ENCODE measurements at regions of chrX and their contacts with region 1.

Region 1: GRCh38 chrX:105314466-105314865 is 94.0 kb upstream of the TEX13A start:
- DNase-seq: peak; percentile 14 to 91
- H3K4me3 ChIP-seq: peak overlapping the region; percentile 57
- H3K27ac ChIP-seq: peak overlapping the region; percentile 98
- H3K4me1 ChIP-seq: peaks cover 39% of the 10 kb centered on the region
- H3K27me3 ChIP-seq: no peaks in the 10 kb centered on the region
- CTCF ChIP-seq: no peak

Region 2: DNA sequence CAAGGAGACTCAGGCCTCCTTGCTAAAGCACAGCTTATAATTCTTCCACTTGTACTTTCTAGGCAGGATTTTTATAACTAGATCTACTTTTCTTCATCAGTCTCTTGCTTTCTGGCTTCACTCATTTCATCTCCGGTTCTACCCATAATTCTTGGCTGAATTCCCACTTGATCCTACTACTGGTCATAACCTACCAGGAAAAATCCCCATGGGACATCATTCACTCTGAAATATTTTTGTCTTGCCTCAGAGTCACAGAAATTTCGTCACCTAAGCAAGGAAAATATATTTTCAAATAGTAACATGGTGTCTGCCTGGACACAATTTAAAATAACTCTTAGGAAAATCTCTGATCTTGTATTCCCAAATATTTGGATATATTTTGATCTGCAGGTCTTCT is 216.3 kb before region 1 on chrX:
- CTCF ChIA-PET with region 1: no interaction called
- POLR2A ChIA-PET with region 1: no interaction called
- intact Hi-C with region 1: no loop called
- DNase-seq: no peak
- H3K4me3 ChIP-seq: no peak overlapping the region
- H3K27ac ChIP-seq: no peak overlapping the region
- H3K4me1 ChIP-seq: no peaks in the 10 kb centered on the region
- H3K27me3 ChIP-seq: no peaks in the 10 kb centered on the region
- CTCF ChIP-seq: no peak

Region 3: DNA sequence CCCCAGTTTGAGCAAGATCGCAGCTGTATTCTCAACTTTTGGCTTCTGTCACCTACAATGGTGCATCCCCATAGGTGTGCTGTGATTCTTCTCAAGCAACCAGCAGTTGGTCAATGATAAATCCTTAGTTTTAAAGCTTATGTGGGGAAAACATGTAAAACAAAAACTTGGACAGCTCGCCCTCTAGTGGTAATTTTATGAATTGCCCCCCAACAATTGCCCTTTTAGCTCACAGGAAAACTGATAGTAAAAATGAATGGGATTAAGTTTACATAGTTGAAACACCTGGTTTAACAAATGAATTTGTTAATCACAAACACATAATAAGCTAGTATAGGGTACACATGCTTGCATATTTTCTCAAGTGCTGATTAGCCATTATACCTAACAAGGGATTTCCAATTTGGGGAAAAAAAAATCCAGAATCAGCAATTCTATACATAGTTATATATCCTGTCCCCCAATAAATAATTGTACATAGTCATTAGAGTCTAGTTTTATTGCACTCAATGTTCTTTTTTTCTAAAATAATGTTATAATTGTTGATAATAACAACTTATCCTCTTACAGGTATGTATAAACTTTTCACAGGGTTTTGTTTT is 124.1 kb before region 1 on chrX:
- CTCF ChIA-PET with region 1: no interaction called
- POLR2A ChIA-PET with region 1: no interaction called
- intact Hi-C with region 1: loop called (anchors 2 kb)
- DNase-seq: peak in 1 of 2 experiments; percentile 39
- H3K4me3 ChIP-seq: no peak overlapping the region
- H3K27ac ChIP-seq: no peak overlapping the region
- H3K4me1 ChIP-seq: no peaks in the 10 kb centered on the region
- H3K27me3 ChIP-seq: no peaks in the 10 kb centered on the region
- CTCF ChIP-seq: peak; percentile 80

Region 4: DNA sequence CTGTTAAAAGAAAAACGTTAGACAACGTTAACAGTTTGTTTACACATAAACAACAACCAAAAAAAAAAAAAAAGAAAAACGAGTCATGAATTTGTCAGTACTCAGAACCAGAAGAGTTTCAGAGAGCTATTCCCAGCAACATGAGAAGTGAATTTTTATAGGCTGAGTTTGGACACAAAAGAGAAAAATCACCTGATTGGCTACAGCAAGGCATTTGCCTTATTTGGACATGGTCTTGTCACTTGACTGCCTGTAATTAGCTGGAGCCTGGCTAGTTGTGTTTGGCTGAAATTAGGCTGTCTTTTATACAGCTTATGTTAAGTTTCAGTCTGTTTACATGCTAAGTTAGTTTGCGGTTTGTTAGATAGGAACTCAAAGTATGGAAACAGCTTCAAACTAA is 93.1 kb before region 1 on chrX:
- CTCF ChIA-PET with region 1: no interaction called
- POLR2A ChIA-PET with region 1: no interaction called
- intact Hi-C with region 1: no loop called
- DNase-seq: no peak
- H3K4me3 ChIP-seq: no peak overlapping the region
- H3K27ac ChIP-seq: no peak overlapping the region
- H3K4me1 ChIP-seq: no peaks in the 10 kb centered on the region
- H3K27me3 ChIP-seq: no peaks in the 10 kb centered on the region
- CTCF ChIP-seq: no peak

Region 5: GRCh38 chrX:105273136-105273730 is 41.2 kb before region 1 on chrX:
- CTCF ChIA-PET with region 1: no interaction called
- POLR2A ChIA-PET with region 1: no interaction called
- intact Hi-C with region 1: loop called (anchors 5 kb)
- DNase-seq: peak; percentile 54 to 83
- H3K4me3 ChIP-seq: no peak overlapping the region
- H3K27ac ChIP-seq: peak overlapping the region; percentile 60
- H3K4me1 ChIP-seq: peaks cover 23% of the 10 kb centered on the region
- H3K27me3 ChIP-seq: no peaks in the 10 kb centered on the region
- CTCF ChIP-seq: no peak

Region 6: GRCh38 chrX:105460376-105460775 is 145.9 kb after region 1 on chrX:
- CTCF ChIA-PET with region 1: no interaction called
- POLR2A ChIA-PET with region 1: no interaction called
- intact Hi-C with region 1: loop called (anchors 5 kb)
- DNase-seq: no peak
- H3K4me3 ChIP-seq: no peak overlapping the region
- H3K27ac ChIP-seq: no peak overlapping the region
- H3K4me1 ChIP-seq: no peaks in the 10 kb centered on the region; the same call in 1 of the 2 replicates
- H3K27me3 ChIP-seq: no peaks in the 10 kb centered on the region
- CTCF ChIP-seq: no peak

Measured in PC-9 (cell line).